Aorta (tissue), 5 donors: ENCODE measurements at regions of chr6 and their contacts with region 1.

Region 1: DNA sequence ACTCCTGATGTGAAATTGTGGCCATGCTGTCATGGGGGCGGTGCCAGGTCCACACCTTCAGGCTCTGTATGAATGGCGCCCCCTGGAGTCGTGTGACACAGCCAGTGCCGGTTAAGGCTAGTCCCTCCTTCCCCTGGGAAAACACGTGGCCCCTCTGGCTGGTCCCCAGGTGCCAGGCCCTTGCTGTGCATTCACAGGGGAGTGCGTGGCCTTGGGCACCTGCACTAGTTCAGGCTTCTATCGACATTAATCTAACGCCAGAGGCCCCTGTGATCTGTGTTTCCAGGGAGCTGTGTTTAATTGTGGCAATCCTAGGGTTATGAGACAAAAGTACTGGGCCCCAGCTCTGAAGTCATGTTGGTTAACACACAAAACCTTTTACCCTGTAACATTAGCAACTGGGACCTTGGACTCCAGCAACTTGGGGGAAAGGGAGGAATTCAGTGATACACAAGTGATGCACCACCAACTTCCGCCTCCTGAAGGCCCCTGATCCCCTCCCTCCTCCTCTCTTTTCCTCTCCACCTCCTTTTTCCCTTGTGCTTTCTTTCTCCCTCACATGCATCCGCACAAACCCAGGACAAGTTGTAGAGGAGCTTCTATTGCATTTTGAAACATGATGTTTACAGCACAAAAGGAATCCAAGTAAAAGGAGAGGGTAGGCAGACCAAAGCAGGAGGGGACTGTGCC is 74.0 kb downstream of the SSR1 start:
- DNase-seq: peak; percentile 88 to 94
- ATAC-seq: peak; percentile 62
- H3K4me3 ChIP-seq: no peak overlapping the region
- H3K27ac ChIP-seq: no peak overlapping the region
- H3K4me1 ChIP-seq: no peaks in the 10 kb centered on the region
- H3K27me3 ChIP-seq: no peaks in the 10 kb centered on the region

Region 2: GRCh38 chr6:6676910-6677441 is 562.1 kb before region 1 on chr6:
- intact Hi-C with region 1: loop called (anchors 5 kb)
- DNase-seq: peak; percentile 80 to 84
- ATAC-seq: peak; percentile 91
- H3K4me3 ChIP-seq: no peak overlapping the region
- H3K27ac ChIP-seq: no peak overlapping the region
- H3K4me1 ChIP-seq: no peaks in the 10 kb centered on the region
- H3K27me3 ChIP-seq: no peaks in the 10 kb centered on the region

Region 3: GRCh38 chr6:6724539-6725467 is 514.2 kb before region 1 on chr6:
- intact Hi-C with region 1: loop called (anchors 5 to 10 kb)
- DNase-seq: peak in 1 of 2 donors; percentile 80
- ATAC-seq: peak; percentile 90
- H3K4me3 ChIP-seq: peak overlapping the region in 1 of 2 donors; percentile 17
- H3K27ac ChIP-seq: no peak overlapping the region
- H3K4me1 ChIP-seq: no peaks in the 10 kb centered on the region
- H3K27me3 ChIP-seq: no peaks in the 10 kb centered on the region

Region 4: GRCh38 chr6:6927521-6928371 is 311.3 kb before region 1 on chr6:
- intact Hi-C with region 1: loop called in 1 of 2 experiments (anchors 10 kb)
- DNase-seq: peak in 1 of 2 donors; percentile 60
- ATAC-seq: peak; percentile 62
- H3K4me3 ChIP-seq: no peak overlapping the region
- H3K27ac ChIP-seq: no peak overlapping the region
- H3K4me1 ChIP-seq: no peaks in the 10 kb centered on the region
- H3K27me3 ChIP-seq: no peaks in the 10 kb centered on the region

Region 5: DNA sequence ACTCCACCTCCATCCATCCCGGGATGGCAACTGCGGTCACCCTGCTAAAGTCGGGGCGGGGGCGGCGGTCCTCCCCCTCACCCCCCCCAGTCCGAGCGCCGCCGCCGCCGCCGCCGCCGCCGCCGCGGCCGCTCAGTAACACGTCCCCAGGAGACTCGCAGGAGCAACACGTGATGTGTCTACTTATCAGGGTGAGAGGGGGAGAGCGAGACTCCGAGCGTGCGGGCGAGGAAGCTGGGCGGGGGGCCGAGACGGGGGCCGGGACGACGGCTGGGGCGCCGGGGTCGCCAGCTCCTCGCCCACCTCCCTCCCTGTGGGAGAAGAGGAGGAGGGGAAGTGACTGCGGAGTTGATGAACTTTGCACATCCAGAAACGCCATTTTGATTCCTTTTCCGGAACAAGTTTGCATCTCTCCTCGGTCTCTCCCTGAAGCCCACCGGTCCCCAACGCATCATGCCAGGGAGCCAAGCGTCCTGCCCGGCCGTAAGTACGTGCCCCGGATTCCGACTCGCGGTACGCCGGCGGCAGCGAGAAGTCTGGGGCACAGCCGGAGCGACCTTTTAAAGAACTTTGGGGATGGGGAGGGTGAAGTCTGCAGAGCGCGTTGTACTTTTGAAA is 131.4 kb before region 1 on chr6 and contains the start of gene RREB1:
- intact Hi-C with region 1: loop called (anchors 5 kb)
- DNase-seq: peak; percentile 77 to 85
- ATAC-seq: peak; percentile 84
- H3K4me3 ChIP-seq: peak within 1 kb of the TSS; percentile 84 to 90
- H3K27ac ChIP-seq: peak within 1 kb of the TSS; percentile 32 to 60
- H3K4me1 ChIP-seq: no peaks in the 10 kb centered on the region
- H3K27me3 ChIP-seq: no peaks in the 10 kb centered on the region
- total RNA-seq, gene RREB1: 30.7 to 44.7 TPM

Region 6: DNA sequence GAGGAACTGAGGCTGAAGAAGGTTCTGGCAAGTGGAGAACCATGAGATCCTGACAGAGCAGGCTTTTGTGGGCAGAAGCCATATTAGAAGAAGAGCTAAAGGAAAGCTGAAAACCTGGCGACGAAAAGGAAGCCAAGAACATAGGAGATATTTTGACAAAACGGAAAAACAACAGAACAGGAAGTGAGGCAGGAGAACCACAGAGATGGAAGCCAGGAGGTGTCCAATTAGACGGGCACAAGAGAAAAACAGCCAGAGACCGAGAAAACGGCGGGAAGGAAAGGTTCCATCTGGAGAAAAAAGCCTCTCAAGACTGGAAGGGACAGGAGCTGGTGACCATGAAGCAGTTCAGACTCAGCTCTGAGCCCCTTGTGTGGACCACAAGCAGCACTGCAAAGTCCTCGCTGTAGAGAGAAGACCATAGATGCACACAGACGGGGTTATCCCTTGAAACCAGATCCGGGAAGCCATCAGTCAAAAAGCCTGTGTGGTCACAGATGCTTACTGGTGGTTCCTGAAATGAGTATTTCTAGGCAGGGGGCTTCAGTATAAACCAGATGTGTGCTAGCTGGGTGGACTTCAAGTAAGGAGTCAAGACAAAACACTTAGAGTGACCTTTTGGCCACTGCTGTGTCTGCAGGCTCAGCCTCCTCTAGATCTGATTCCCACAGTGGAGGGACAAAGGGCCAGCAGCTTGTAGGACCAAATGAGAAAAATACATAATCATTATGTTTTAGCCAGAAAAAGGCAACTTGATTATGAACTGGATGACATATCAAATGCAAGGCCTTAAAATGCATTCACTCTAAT is 43.3 kb after region 1 on chr6:
- intact Hi-C with region 1: no loop called
- DNase-seq: no peak
- ATAC-seq: no peak
- H3K4me3 ChIP-seq: no peak overlapping the region
- H3K27ac ChIP-seq: no peak overlapping the region
- H3K4me1 ChIP-seq: no peaks in the 10 kb centered on the region
- H3K27me3 ChIP-seq: no peaks in the 10 kb centered on the region